Prostate gland (tissue), 2 donors: ENCODE measurements at regions of chr4 and their contacts with region 1.

Region 1: GRCh38 chr4:7802093-7802726 is 137.5 kb downstream of the AFAP1 start:
- DNase-seq: peak; percentile 69
- H3K4me3 ChIP-seq: no peak overlapping the region
- H3K27ac ChIP-seq: no peak overlapping the region
- H3K4me1 ChIP-seq: peaks cover 13% of the 10 kb centered on the region
- H3K27me3 ChIP-seq: no peaks in the 10 kb centered on the region
- CTCF ChIP-seq: peak; percentile 68 to 82 (median 76)
- POLR2A ChIP-seq: no peak

Region 2: GRCh38 chr4:7462509-7462971 is 339.7 kb before region 1 on chr4:
- intact Hi-C with region 1: loop called (anchors 5 kb)
- DNase-seq: peak; percentile 36
- H3K4me3 ChIP-seq: no peak overlapping the region
- H3K27ac ChIP-seq: no peak overlapping the region
- H3K4me1 ChIP-seq: no peaks in the 10 kb centered on the region
- H3K27me3 ChIP-seq: peaks cover 2% of the 10 kb centered on the region
- CTCF ChIP-seq: peak; percentile 22 to 70 (median 58)
- POLR2A ChIP-seq: no peak

Region 3: GRCh38 chr4:7761720-7762119 is 40.5 kb before region 1 on chr4:
- intact Hi-C with region 1: loop called (anchors 2 kb)
- DNase-seq: no peak
- H3K4me3 ChIP-seq: no peak overlapping the region
- H3K27ac ChIP-seq: no peak overlapping the region
- H3K4me1 ChIP-seq: peaks cover 7% of the 10 kb centered on the region
- H3K27me3 ChIP-seq: no peaks in the 10 kb centered on the region
- CTCF ChIP-seq: peak; percentile 42 to 65 (median 55)
- POLR2A ChIP-seq: no peak

Region 4: GRCh38 chr4:7843831-7844593 is 41.8 kb after region 1 on chr4:
- intact Hi-C with region 1: loop called (anchors 2 kb)
- DNase-seq: peak; percentile 36
- H3K4me3 ChIP-seq: no peak overlapping the region
- H3K27ac ChIP-seq: no peak overlapping the region
- H3K4me1 ChIP-seq: no peaks in the 10 kb centered on the region
- H3K27me3 ChIP-seq: no peaks in the 10 kb centered on the region
- CTCF ChIP-seq: peak in 3 of 4 experiments; percentile 36 to 61 (median 39)
- POLR2A ChIP-seq: no peak

Region 5: DNA sequence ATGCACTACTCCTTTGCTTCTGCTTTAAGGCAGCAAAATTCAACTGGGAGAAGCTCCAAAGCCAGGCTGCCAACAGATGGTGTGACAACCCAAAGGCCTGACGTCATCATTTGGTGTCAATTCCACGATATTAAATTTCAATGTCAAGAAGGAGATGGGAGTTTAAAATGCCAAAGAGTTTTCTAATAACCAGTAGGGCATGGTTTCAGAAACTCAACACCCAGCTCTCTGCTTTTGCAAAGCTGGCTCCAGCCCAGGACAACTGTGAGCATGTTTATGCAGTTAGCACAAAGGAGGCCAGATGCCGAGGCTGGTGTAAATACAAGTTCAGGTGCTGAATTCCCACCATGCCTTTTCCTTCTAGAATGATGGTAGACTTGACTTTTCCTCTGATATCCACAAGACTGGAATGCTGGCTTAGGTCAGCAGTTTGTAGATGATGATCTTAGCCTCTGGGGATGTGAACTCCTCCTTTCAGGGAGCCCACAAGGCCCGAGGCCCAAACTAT is 70.1 kb after region 1 on chr4:
- intact Hi-C with region 1: loop called (anchors 2 kb)
- DNase-seq: peak; percentile 78
- H3K4me3 ChIP-seq: no peak overlapping the region
- H3K27ac ChIP-seq: peak overlapping the region; percentile 35 to 39
- H3K4me1 ChIP-seq: no peaks in the 10 kb centered on the region
- H3K27me3 ChIP-seq: no peaks in the 10 kb centered on the region
- CTCF ChIP-seq: no peak
- POLR2A ChIP-seq: no peak

Region 6: DNA sequence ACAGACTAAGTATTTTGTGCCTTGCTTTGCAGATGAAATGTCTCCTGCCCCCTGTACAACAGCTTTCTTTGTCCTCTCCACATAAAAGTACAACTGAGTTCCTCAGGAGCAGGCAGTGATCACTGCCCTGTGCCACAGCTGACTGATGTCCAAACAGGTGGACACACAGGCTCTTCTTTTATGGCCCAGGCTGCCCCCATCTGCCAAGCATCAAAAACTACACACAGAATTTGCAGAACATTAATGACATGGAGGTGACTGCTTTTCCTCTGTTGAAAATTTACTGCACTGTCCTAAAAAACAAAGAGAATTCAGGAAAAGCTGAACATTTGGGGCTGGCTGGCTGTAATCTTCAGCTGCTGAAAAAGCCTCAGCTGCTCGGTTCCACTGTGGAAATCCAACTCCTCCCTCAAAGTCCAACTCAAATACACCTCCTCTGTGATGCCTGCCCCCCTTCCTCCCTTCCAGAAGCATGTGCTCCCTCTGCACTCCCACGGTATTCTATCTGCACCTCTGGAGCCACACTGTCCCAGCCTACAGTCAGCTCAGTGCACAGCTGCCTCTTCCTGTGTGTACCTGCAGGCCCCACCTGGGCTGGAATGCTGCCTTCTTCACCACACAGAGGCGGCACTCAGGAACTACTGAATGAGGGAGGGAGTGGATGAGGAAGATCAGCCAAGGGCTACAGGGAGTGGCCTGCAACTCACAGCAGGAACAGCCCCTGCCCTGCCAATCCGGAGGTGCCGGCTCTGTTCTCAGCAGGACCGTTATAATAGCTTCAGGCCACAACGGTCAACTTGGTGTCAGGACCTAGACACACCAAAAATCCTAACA is 127.1 kb after region 1 on chr4:
- intact Hi-C with region 1: loop called (anchors 2 kb)
- DNase-seq: peak; percentile 85
- H3K4me3 ChIP-seq: no peak overlapping the region
- H3K27ac ChIP-seq: peak overlapping the region in 1 of 2 donors; percentile 54
- H3K4me1 ChIP-seq: peaks cover 3% of the 10 kb centered on the region
- H3K27me3 ChIP-seq: no peaks in the 10 kb centered on the region
- CTCF ChIP-seq: peak in 2 of 4 experiments; percentile 28 to 52
- POLR2A ChIP-seq: peak; percentile 17

Region 7: GRCh38 chr4:7987148-7987989 is 185.2 kb after region 1 on chr4:
- intact Hi-C with region 1: loop called (anchors 1 kb)
- DNase-seq: peak; percentile 68
- H3K4me3 ChIP-seq: no peak overlapping the region
- H3K27ac ChIP-seq: no peak overlapping the region
- H3K4me1 ChIP-seq: no peaks in the 10 kb centered on the region
- H3K27me3 ChIP-seq: no peaks in the 10 kb centered on the region
- CTCF ChIP-seq: peak; percentile 79 to 90 (median 83)
- POLR2A ChIP-seq: no peak

Region 8: DNA sequence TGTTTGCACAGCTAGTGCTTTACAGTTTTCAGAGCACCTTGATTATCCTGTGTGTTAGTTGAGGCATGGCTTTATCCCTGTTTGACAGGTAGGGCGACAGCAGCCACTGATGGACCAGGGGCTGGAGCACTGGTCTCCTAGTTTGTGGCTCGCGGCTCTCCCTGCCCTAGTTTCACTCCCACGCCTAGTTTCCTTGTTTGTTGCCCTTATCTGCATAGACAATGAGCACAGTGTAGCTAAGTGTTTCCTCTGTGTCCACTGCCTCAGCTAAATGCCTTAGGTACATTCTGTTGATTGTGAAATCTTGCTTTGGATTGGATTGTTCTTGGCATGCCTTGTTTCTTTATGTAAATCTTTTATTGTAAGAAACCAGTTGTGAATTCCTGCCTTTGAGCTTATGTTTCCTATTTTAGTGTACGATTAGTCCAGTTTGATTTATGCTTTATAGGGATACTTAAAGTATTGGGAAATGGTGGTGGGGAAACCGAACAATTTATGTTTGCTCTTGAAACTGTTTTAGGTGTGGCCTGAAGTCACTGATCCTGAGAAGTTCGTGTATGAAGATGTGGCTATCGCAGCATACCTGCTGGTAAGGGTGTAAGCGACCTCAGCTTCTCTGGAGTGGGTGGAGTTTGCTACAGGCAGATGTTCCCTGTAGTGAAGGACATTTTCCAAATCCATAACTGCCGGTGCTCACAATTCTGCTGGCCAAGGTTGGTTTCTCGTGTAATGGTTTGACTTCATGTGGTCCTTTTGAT is 649.4 kb after region 1 on chr4:
- intact Hi-C with region 1: no loop called
- DNase-seq: peak; percentile 60
- H3K4me3 ChIP-seq: no peak overlapping the region
- H3K27ac ChIP-seq: peak overlapping the region; percentile 30 to 58
- H3K4me1 ChIP-seq: no peaks in the 10 kb centered on the region
- H3K27me3 ChIP-seq: no peaks in the 10 kb centered on the region
- CTCF ChIP-seq: no peak
- POLR2A ChIP-seq: no peak

Region 9: GRCh38 chr4:8940792-8941491 is 1138.7 kb after region 1 on chr4:
- intact Hi-C with region 1: no loop called
- DNase-seq: no peak
- H3K4me3 ChIP-seq: no peak overlapping the region
- H3K27ac ChIP-seq: no peak overlapping the region
- H3K4me1 ChIP-seq: no peaks in the 10 kb centered on the region
- H3K27me3 ChIP-seq: peaks cover 5% of the 10 kb centered on the region
- CTCF ChIP-seq: peak in 1 of 4 experiments; percentile 9
- POLR2A ChIP-seq: no peak